Mammary epithelial cell (primary cell): ENCODE measurements at regions of chr13 and their contacts with region 1.

Region 1: GRCh38 chr13:109145631-109146030 is 516.2 kb downstream of the MYO16 start:
- DNase-seq: peak; percentile 72
- H3K4me3 ChIP-seq: no peak overlapping the region
- H3K27ac ChIP-seq: peak overlapping the region; percentile 99
- H3K4me1 ChIP-seq: peaks cover 38% of the 10 kb centered on the region
- H3K27me3 ChIP-seq: no peaks in the 10 kb centered on the region
- CTCF ChIP-seq: peak; percentile 93 to 98

Region 2: GRCh38 chr13:109105899-109106298 is 39.7 kb before region 1 on chr13:
- CTCF ChIA-PET with region 1: no interaction called
- dilution Hi-C with region 1: no loop called
- in situ Hi-C with region 1: no loop called
- intact Hi-C with region 1: no loop called
- DNase-seq: no peak
- H3K4me3 ChIP-seq: no peak overlapping the region
- H3K27ac ChIP-seq: no peak overlapping the region
- H3K4me1 ChIP-seq: no peaks in the 10 kb centered on the region
- H3K27me3 ChIP-seq: no peaks in the 10 kb centered on the region
- CTCF ChIP-seq: no peak

Region 3: DNA sequence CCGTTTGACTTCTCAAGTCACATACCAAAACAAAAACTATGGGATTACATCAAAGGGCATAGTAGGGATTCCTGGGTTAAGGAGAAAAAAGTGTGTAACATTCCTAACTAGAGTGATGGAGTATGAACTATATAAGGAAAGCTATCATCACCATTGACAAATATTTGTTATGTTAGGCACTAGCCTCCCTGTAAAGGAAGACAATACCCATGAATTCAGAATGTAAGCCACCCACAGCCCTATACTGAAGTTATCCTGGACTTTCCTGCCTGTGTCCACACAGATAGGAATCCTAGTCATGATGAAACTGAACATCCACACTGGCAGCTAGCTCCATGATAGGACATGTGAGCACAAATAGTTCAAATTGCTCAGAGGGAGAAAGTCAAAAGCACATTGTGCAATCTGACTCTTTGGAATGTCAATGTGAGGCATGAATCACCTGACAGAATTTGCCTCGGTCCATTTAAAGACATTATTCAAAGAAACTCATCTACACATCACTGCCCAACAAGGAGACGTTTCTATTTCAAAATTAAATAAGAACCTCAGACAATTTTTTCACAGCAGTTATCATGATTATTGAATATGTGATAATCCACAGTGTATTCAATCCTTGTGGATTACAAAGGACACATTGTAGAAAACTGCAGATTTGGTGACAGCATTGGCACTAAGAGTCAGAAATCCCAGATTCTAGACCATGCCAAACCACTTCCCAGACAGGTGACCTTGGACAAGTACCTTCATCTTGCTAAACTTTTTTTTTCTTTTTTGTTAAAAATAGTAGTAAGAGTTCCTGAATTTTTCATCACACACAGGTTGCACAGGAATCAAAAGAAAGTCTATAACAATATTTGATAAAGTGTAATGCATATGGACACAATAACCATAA is 111.5 kb after region 1 on chr13:
- CTCF ChIA-PET with region 1: no interaction called
- dilution Hi-C with region 1: no loop called
- in situ Hi-C with region 1: loop called (anchors 5 to 10 kb)
- intact Hi-C with region 1: loop called (anchors 1 kb)
- DNase-seq: peak; percentile 100
- H3K4me3 ChIP-seq: no peak overlapping the region
- H3K27ac ChIP-seq: peak overlapping the region; percentile 99
- H3K4me1 ChIP-seq: peaks cover 57% of the 10 kb centered on the region
- H3K27me3 ChIP-seq: no peaks in the 10 kb centered on the region
- CTCF ChIP-seq: no peak

Region 4: GRCh38 chr13:109383670-109384069 is 238.0 kb after region 1 on chr13:
- CTCF ChIA-PET with region 1: no interaction called
- dilution Hi-C with region 1: no loop called
- in situ Hi-C with region 1: no loop called
- intact Hi-C with region 1: loop called (anchors 2 kb)
- DNase-seq: peak; percentile 90
- H3K4me3 ChIP-seq: no peak overlapping the region
- H3K27ac ChIP-seq: peak overlapping the region; percentile 13
- H3K4me1 ChIP-seq: peaks cover 29% of the 10 kb centered on the region
- H3K27me3 ChIP-seq: no peaks in the 10 kb centered on the region
- CTCF ChIP-seq: peak in 1 of 2 donors; percentile 27

Region 5: GRCh38 chr13:109728791-109729731 is 583.4 kb after region 1 on chr13:
- CTCF ChIA-PET with region 1: interaction called, 12 read pairs
- dilution Hi-C with region 1: no loop called
- in situ Hi-C with region 1: no loop called
- intact Hi-C with region 1: no loop called
- DNase-seq: peak; percentile 63
- H3K4me3 ChIP-seq: no peak overlapping the region
- H3K27ac ChIP-seq: no peak overlapping the region
- H3K4me1 ChIP-seq: peaks cover 13% of the 10 kb centered on the region
- H3K27me3 ChIP-seq: no peaks in the 10 kb centered on the region
- CTCF ChIP-seq: no peak

Region 6: DNA sequence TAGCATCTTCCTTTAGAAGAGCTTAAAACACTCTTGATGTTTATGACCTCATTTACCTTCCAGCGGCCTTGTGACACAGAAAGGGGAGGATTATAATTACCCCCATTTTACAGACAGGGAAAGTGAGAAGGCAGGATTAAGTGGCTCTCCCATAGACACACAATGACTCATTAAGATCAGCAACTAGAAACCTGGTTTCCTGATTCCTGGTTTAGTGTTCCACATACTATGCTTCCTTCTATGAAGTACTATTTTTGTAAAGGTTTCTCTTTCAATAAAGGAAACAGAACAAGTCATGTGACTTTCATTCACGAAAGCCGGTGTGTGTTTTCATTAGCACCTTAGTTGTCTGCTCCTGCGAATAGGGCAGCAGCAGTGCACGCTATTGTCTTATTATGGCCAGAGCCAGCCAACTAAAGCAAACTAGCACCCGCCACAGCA is 632.5 kb after region 1 on chr13:
- CTCF ChIA-PET with region 1: no interaction called
- dilution Hi-C with region 1: no loop called
- in situ Hi-C with region 1: loop called (anchors 10 to 25 kb)
- intact Hi-C with region 1: loop called (anchors 1 kb)
- DNase-seq: peak; percentile 59
- H3K4me3 ChIP-seq: peak overlapping the region in 2 of 3 experiments; percentile 56 to 58
- H3K27ac ChIP-seq: peak overlapping the region; percentile 22
- H3K4me1 ChIP-seq: peaks cover 46% of the 10 kb centered on the region
- H3K27me3 ChIP-seq: no peaks in the 10 kb centered on the region
- CTCF ChIP-seq: no peak

Region 7: GRCh38 chr13:109945206-109945960 is 799.8 kb after region 1 on chr13:
- CTCF ChIA-PET with region 1: no interaction called
- dilution Hi-C with region 1: no loop called
- in situ Hi-C with region 1: no loop called
- intact Hi-C with region 1: no loop called
- DNase-seq: peak; percentile 96
- H3K4me3 ChIP-seq: no peak overlapping the region
- H3K27ac ChIP-seq: peak overlapping the region; percentile 74
- H3K4me1 ChIP-seq: peaks cover 11% of the 10 kb centered on the region
- H3K27me3 ChIP-seq: no peaks in the 10 kb centered on the region
- CTCF ChIP-seq: no peak